ENCODE measurements at regions of chr16 and their contacts with region 1.

Region 1: DNA sequence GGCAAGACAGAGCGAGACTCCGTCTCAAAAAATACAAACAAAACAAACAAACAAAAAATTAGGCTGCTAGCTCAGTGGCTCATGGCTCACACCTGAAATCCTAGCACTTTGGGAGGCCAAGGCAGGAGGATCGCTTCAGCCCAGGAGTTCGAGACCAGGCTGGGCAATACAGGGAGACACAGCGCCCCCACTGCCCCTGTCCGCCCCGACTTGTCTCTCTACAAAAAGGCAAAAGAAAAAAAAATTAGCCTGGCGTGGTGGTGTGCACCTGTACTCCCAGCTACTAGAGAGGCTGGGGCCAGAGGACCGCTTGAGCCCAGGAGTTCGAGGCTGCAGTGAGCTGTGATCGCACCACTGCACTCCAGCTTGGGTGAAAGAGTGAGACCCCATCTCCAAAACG is 531 bp upstream of the CDH1 start:
- DNase-seq: no peak
- ATAC-seq: no peak
- H3K4me3 ChIP-seq: no peak overlapping the region
- H3K27ac ChIP-seq: no peak overlapping the region
- H3K4me1 ChIP-seq: no peaks in the 10 kb centered on the region
- H3K27me3 ChIP-seq: peaks cover 53% of the 10 kb centered on the region
- CTCF ChIP-seq: no peak
- POLR2A ChIP-seq: no peak
- RAD21 ChIP-seq: no peak

Region 2: GRCh38 chr16:67628216-67628615 is 1108.3 kb before region 1 on chr16:
- CTCF ChIA-PET with region 1: no interaction called
- POLR2A ChIA-PET with region 1: no interaction called
- dilution Hi-C with region 1: no loop called
- in situ Hi-C with region 1: no loop called
- intact Hi-C with region 1: no loop called
- DNase-seq: no peak
- ATAC-seq: no peak
- H3K4me3 ChIP-seq: no peak overlapping the region
- H3K27ac ChIP-seq: no peak overlapping the region
- H3K4me1 ChIP-seq: peaks cover 5% of the 10 kb centered on the region
- H3K27me3 ChIP-seq: no peaks in the 10 kb centered on the region
- CTCF ChIP-seq: no peak
- POLR2A ChIP-seq: no peak
- RAD21 ChIP-seq: no peak

Region 3: GRCh38 chr16:68328151-68328859 is 408.3 kb before region 1 on chr16:
- CTCF ChIA-PET with region 1: no interaction called
- POLR2A ChIA-PET with region 1: no interaction called
- dilution Hi-C with region 1: no loop called
- in situ Hi-C with region 1: no loop called
- intact Hi-C with region 1: no loop called
- DNase-seq: peak; percentile 83
- ATAC-seq: peak; percentile 86
- H3K4me3 ChIP-seq: no peak overlapping the region
- H3K27ac ChIP-seq: no peak overlapping the region
- H3K4me1 ChIP-seq: peaks cover 10% of the 10 kb centered on the region
- H3K27me3 ChIP-seq: no peaks in the 10 kb centered on the region
- CTCF ChIP-seq: peak; percentile 94
- POLR2A ChIP-seq: no peak; the same call in 1 of the 2 replicates
- RAD21 ChIP-seq: peak; percentile 92

Region 4: GRCh38 chr16:68564367-68564985 is 172.1 kb before region 1 on chr16:
- CTCF ChIA-PET with region 1: no interaction called
- POLR2A ChIA-PET with region 1: no interaction called
- dilution Hi-C with region 1: no loop called
- in situ Hi-C with region 1: no loop called
- intact Hi-C with region 1: no loop called
- DNase-seq: peak; percentile 8
- ATAC-seq: no peak
- H3K4me3 ChIP-seq: no peak overlapping the region
- H3K27ac ChIP-seq: no peak overlapping the region
- H3K4me1 ChIP-seq: no peaks in the 10 kb centered on the region
- H3K27me3 ChIP-seq: no peaks in the 10 kb centered on the region
- CTCF ChIP-seq: no peak
- POLR2A ChIP-seq: no peak
- RAD21 ChIP-seq: no peak

Region 5: DNA sequence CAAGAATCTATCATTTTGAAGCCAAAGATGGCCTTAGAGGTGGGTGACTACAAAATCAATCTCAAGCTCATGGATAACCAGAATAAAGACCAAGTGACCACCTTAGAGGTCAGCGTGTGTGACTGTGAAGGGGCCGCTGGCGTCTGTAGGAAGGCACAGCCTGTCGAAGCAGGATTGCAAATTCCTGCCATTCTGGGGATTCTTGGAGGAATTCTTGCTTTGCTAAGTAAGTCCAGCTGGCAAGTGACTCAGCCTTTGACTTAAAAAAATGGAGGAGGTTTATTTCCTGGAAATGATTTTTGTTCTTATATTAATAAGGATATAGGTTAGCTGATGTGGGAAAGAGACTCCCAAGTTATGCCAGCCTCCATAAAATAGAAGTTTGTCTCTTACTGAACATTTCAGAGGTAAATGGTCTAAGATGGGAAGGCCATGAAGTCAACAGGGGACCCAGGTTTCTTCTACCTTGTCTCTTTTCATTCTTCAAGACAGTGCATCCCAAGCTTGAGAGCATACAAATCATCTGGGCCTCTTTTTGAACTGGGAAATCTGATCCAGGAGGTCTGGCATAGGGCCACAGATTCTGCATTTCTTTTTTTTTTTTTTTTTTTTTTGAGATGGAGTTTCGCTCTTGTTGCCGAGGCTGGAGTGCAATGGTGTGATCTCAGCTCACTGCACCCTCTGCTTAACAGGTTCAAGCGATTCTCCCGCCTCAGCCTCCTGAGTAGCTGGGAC is 87.0 kb after region 1 on chr16:
- CTCF ChIA-PET with region 1: no interaction called
- POLR2A ChIA-PET with region 1: interaction called, 18 read pairs
- dilution Hi-C with region 1: no loop called
- in situ Hi-C with region 1: no loop called
- intact Hi-C with region 1: no loop called
- DNase-seq: peak; percentile 89
- ATAC-seq: peak; percentile 92
- H3K4me3 ChIP-seq: no peak overlapping the region
- H3K27ac ChIP-seq: peak overlapping the region; percentile 95
- H3K4me1 ChIP-seq: peaks cover 9% of the 10 kb centered on the region
- H3K27me3 ChIP-seq: peaks cover 3% of the 10 kb centered on the region
- CTCF ChIP-seq: no peak
- POLR2A ChIP-seq: no peak
- RAD21 ChIP-seq: no peak

Region 6: DNA sequence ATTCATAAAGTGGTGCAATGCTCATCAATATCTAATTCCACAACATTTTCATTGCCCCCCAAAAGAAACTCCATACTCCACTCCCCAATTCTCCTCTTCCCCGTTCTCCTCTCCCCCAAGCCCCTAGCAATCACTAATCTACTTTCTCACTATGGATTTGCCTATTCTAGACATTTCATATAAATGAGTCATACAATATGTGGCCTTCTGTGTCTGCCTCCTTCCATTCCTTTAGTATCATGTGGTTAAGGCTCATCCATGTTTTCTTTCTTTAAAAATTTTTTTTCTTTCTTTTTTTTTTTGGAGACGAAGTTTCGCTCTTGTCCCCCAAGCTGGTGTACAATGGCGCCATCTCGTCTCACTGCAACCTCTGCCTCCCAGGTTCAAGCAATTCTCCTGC is 312.6 kb after region 1 on chr16:
- CTCF ChIA-PET with region 1: no interaction called
- POLR2A ChIA-PET with region 1: no interaction called
- dilution Hi-C with region 1: no loop called
- in situ Hi-C with region 1: no loop called
- intact Hi-C with region 1: no loop called
- DNase-seq: peak; percentile 80
- ATAC-seq: peak; percentile 93
- H3K4me3 ChIP-seq: no peak overlapping the region
- H3K27ac ChIP-seq: peak overlapping the region; percentile 40; the same call in 1 of the 2 replicates
- H3K4me1 ChIP-seq: peaks cover 7% of the 10 kb centered on the region
- H3K27me3 ChIP-seq: no peaks in the 10 kb centered on the region
- CTCF ChIP-seq: no peak
- POLR2A ChIP-seq: no peak
- RAD21 ChIP-seq: no peak

Measured in IMR-90 (cell line).